Right ventricle myocardium inferior (tissue), 1 donor: ENCODE measurements at regions of chr5 and their contacts with region 1.

Region 1: GRCh38 chr5:81194633-81195333 is 38.3 kb upstream of the CKMT2 start:
- DNase-seq: peak; percentile 90
- ATAC-seq: peak; percentile 97

Region 2: GRCh38 chr5:80487829-80488721 is 706.7 kb before region 1 on chr5 and contains the start of gene FAM151B:
- intact Hi-C with region 1: loop called (anchors 10 kb)
- DNase-seq: peak; percentile 92
- ATAC-seq: peak; percentile 93
- total RNA-seq, gene FAM151B: 1.6 TPM

Region 3: DNA sequence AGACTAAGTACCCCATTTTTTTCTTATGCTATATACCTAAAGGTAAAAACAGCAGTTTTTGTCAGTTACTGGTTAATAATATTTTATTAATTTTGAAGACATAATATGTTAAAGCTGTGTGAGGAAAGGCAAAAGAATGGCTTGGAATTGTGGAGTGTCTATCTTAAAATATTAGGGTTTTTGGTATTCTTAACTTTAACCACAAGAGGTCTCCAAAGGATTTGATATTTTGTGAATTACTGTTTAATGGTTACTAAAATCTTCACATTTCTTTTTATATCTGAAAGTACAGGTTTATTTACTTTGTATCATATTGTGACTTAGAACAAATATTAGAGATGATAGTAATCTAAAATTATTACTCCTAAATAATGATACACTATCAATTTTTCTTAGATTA is 508.0 kb before region 1 on chr5:
- intact Hi-C with region 1: loop called (anchors 5 kb)
- DNase-seq: no peak
- ATAC-seq: no peak

Region 4: GRCh38 chr5:80804332-80804731 is 390.5 kb before region 1 on chr5:
- intact Hi-C with region 1: loop called (anchors 10 kb)
- DNase-seq: no peak
- ATAC-seq: no peak